Ovary (tissue), 10 donors: ENCODE measurements at regions of chr9 and their contacts with region 1.

Region 1: DNA sequence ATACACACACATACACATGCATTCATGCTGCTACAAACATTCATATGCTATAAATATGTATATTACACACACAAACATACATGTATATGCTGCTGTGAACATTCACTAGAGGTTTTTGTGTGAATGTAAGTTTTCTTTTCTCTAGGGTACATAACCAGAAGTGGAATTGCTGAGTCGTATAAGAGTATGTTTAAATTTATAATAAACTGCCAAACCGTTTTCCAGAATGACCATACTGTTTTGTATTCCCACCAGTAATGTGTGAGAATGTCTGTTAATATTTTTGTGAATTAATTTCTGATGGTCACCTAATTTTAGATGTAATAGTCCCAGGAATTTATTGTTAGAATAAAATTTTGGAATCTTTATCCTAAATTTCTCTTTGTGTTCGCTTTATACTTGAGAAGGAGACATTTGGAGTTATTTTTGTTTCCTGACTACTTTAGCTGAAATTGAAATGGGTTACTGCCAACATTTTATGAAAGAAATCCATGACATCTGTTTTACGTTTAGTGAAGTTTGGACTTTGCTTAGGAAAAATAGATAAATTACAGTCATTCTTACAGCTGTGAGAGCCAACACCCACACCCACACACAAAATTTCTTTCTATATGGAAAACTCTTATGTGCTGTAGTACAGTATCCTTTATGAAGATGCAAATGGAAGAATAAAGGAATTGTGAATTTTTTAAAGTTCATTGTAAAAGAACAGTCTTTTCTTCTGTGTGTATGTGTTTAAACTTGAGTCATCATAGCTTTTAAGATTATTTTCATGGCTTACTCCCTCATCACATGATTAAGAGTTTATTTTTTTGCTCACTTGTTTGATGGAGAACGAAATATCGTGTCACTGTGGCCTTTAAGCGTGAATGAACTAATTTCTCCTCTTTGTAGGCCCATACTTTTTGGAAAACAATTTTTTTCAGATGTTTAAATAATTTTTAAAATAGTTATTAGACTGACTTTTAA is 24.3 kb downstream of the CENPP start:
- DNase-seq: no peak
- H3K4me3 ChIP-seq: no peak overlapping the region
- H3K27ac ChIP-seq: peak overlapping the region in 1 of 2 donors; percentile 86
- H3K4me1 ChIP-seq: peaks cover 4% of the 10 kb centered on the region
- H3K27me3 ChIP-seq: no peaks in the 10 kb centered on the region
- CTCF ChIP-seq: no peak
- EP300 ChIP-seq: no peak
- POLR2A ChIP-seq: no peak

Region 2: DNA sequence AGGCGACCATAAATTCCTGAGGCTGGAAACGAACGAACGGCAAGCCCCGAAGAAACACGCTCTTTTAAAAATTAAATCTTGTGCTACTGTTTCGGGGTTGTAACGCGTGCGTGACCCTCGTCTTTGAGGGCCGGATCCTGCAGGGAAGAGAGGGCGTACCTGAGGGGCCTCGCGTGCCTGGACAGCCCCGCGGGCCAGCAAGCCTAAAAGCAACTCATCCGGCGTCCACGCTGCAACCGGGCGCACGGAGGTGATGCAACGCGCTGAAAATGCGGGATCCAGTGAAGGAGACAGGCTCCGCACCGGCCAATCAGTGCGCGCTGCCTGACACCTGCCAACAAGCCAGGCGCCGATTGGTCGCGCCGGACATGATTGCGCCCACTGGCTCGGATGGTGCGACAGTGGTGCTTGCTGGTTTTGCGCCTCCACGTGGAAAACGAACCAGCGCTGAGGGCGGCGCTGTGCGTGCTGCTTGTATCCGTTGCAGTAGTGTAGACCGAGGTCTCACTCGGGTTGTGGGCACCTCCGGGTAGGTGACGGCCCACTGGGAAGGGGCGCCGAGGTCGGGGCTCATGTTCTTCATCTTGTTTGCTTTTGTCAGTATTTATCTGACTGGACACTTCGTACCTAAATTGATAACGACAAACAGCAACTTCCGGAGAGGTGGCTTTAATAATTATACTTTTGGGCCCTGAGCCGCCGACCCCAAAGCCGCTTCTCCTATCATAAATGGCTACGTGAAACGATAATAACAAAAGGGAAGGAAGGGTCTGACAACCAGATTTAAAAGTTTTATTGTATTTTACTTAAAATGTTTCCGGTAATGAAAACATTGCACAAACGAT is 56.4 kb before region 1 on chr9 and contains the start of gene IARS1:
- intact Hi-C with region 1: no loop called
- DNase-seq: peak; percentile 97 to 100 (median 99)
- H3K4me3 ChIP-seq: peak within 1 kb of the TSS; percentile 78
- H3K27ac ChIP-seq: peak within 1 kb of the TSS in 1 of 2 donors; percentile 57
- H3K4me1 ChIP-seq: peaks cover 5% of the 10 kb centered on the region
- H3K27me3 ChIP-seq: no peaks in the 10 kb centered on the region
- CTCF ChIP-seq: peak in 1 of 3 donors; percentile 35
- EP300 ChIP-seq: no peak
- POLR2A ChIP-seq: peak; percentile 64
- total RNA-seq, gene IARS1: 44.4 to 281 (median 64.8) TPM

Region 3: GRCh38 chr9:92404042-92404836 is 54.2 kb after region 1 on chr9 and contains the start of gene OGN:
- intact Hi-C with region 1: no loop called
- DNase-seq: no peak
- H3K4me3 ChIP-seq: peak within 1 kb of the TSS; percentile 13
- H3K27ac ChIP-seq: peak within 1 kb of the TSS in 1 of 2 donors; percentile 17
- H3K4me1 ChIP-seq: peaks cover 2% of the 10 kb centered on the region
- H3K27me3 ChIP-seq: no peaks in the 10 kb centered on the region
- CTCF ChIP-seq: no peak
- EP300 ChIP-seq: no peak
- POLR2A ChIP-seq: no peak
- total RNA-seq, gene OGN: 19.3 to 129 (median 57.7) TPM

Region 4: GRCh38 chr9:92432350-92432749 is 82.3 kb after region 1 on chr9:
- intact Hi-C with region 1: loop called in 1 of 4 experiments (anchors 5 kb)
- DNase-seq: peak in 1 of 5 donors; percentile 39
- H3K4me3 ChIP-seq: no peak overlapping the region
- H3K27ac ChIP-seq: peak overlapping the region in 1 of 2 donors; percentile 35
- H3K4me1 ChIP-seq: no peaks in the 10 kb centered on the region
- H3K27me3 ChIP-seq: no peaks in the 10 kb centered on the region
- CTCF ChIP-seq: no peak
- EP300 ChIP-seq: no peak
- POLR2A ChIP-seq: no peak